Colonic mucosa (tissue), 4 donors: ENCODE measurements at regions of chr21 and their contacts with region 1.

Region 1: GRCh38 chr21:39125752-39126485 is 57.3 kb downstream of the PSMG1 start:
- DNase-seq: peak; percentile 68
- H3K4me3 ChIP-seq: no peak overlapping the region
- H3K27ac ChIP-seq: no peak overlapping the region
- H3K4me1 ChIP-seq: no peaks in the 10 kb centered on the region
- H3K27me3 ChIP-seq: no peaks in the 10 kb centered on the region
- CTCF ChIP-seq: peak; percentile 54

Region 2: DNA sequence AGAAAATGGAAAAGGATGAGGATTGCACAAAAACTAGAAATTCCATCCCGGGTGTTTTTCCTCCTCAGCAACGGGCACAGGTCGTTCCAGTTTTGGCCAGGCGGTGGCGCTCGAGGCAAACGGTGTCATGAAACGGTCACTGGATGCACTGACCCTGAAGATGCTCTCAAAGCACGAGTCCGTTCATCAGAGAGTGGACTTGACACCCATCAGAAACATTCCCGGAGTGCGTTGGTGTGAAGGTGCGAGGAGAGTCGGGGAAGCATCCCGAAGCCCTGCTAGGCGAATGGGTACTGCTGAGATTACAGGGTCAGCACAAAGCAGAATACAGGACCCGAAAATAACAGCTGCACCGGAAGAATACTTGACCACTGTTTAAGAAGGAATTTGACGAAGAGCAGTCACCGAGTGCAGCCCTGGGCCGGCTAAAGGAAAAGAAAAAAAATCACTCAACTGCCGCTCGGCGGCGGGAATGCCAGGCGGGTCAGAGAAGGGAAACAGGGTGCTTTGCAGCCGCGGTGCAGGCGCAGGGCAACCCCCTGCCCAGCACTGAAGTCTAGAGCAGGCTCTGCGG is 391.9 kb before region 1 on chr21:
- intact Hi-C with region 1: loop called (anchors 2 kb)
- DNase-seq: peak; percentile 98
- H3K4me3 ChIP-seq: peak overlapping the region; percentile 19
- H3K27ac ChIP-seq: peak overlapping the region; percentile 84
- H3K4me1 ChIP-seq: peaks cover 11% of the 10 kb centered on the region
- H3K27me3 ChIP-seq: no peaks in the 10 kb centered on the region
- CTCF ChIP-seq: peak; percentile 90

Region 3: DNA sequence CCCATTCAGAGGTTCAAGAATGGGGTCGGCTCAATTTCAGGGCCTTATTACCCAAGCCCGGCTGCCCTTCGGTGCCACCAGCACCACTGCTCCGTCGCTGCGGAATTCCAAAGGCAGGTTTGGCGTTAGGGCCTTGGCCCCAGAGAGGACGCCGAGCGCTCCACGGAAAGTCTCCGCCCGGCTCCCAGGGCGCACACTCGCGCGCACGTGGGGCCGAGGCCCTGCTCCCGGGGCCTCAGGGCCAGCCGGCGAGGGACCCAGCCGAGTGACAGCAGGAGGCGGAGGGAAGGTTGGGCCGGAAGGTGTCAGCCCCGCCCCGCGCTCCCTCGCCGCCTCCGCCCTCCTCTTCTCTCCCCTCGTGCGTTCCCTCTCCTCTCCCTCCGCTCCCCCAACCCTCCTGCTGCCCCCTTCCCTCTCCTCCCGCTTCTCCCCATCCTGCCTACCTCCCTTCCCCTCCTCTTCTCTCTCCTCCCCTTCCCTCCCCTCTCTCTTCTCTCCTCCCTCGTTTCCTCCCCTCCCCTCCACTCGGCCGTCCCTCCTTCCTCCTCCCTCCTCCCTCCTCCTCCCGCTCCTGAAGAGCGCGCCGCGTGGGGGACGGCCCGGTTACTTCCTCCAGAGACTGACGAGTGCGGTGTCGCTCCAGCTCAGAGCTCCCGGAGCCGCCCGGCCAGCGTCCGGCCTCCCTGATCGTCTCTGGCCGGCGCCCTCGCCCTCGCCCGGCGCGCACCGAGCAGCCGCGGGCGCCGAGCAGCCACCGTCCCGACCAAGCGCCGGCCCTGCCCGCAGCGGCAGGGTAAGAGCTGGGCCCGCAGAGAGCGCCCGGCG is 320.4 kb before region 1 on chr21 and contains the start of gene ETS2:
- intact Hi-C with region 1: loop called (anchors 5 kb)
- DNase-seq: peak; percentile 94
- H3K4me3 ChIP-seq: peak within 1 kb of the TSS; percentile 83
- H3K27ac ChIP-seq: peak within 1 kb of the TSS; percentile 95
- H3K4me1 ChIP-seq: no peaks in the 10 kb centered on the region
- H3K27me3 ChIP-seq: no peaks in the 10 kb centered on the region
- CTCF ChIP-seq: no peak
- total RNA-seq, gene ETS2: 110 to 185 TPM